Activated CD8-positive, alpha-beta memory T cell treated with anti-CD3 and anti-CD28 coated beads, Interleukin-2, amount 10 ng/mL, durations not matched to agents 7 days and 5 days (primary cell): ENCODE measurements at regions of chr15 and their contacts with region 1.

Region 1: GRCh38 chr15:89740137-89740536 is 10.9 kb downstream of the MESP1 start:
- DNase-seq: peak; percentile 71
- ATAC-seq: peak; percentile 95
- H3K4me3 Mint-ChIP-seq: no peak overlapping the region
- H3K27ac Mint-ChIP-seq: no peak overlapping the region
- H3K4me1 Mint-ChIP-seq: peaks cover 3% of the 10 kb centered on the region
- H3K27me3 Mint-ChIP-seq: peaks cover 2% of the 10 kb centered on the region

Region 2: GRCh38 chr15:89587952-89588351 is 152.2 kb before region 1 on chr15:
- CTCF ChIA-PET with region 1: no interaction called
- DNase-seq: no peak
- ATAC-seq: no peak
- H3K4me3 Mint-ChIP-seq: no peak overlapping the region
- H3K27ac Mint-ChIP-seq: no peak overlapping the region
- H3K4me1 Mint-ChIP-seq: peaks cover 2% of the 10 kb centered on the region
- H3K27me3 Mint-ChIP-seq: no peaks in the 10 kb centered on the region

Region 3: GRCh38 chr15:89728254-89728653 is 11.9 kb before region 1 on chr15:
- CTCF ChIA-PET with region 1: interaction called, 20 read pairs
- DNase-seq: no peak
- ATAC-seq: no peak
- H3K4me3 Mint-ChIP-seq: no peak overlapping the region
- H3K27ac Mint-ChIP-seq: no peak overlapping the region
- H3K4me1 Mint-ChIP-seq: no peaks in the 10 kb centered on the region
- H3K27me3 Mint-ChIP-seq: peaks cover 26% of the 10 kb centered on the region

Region 4: DNA sequence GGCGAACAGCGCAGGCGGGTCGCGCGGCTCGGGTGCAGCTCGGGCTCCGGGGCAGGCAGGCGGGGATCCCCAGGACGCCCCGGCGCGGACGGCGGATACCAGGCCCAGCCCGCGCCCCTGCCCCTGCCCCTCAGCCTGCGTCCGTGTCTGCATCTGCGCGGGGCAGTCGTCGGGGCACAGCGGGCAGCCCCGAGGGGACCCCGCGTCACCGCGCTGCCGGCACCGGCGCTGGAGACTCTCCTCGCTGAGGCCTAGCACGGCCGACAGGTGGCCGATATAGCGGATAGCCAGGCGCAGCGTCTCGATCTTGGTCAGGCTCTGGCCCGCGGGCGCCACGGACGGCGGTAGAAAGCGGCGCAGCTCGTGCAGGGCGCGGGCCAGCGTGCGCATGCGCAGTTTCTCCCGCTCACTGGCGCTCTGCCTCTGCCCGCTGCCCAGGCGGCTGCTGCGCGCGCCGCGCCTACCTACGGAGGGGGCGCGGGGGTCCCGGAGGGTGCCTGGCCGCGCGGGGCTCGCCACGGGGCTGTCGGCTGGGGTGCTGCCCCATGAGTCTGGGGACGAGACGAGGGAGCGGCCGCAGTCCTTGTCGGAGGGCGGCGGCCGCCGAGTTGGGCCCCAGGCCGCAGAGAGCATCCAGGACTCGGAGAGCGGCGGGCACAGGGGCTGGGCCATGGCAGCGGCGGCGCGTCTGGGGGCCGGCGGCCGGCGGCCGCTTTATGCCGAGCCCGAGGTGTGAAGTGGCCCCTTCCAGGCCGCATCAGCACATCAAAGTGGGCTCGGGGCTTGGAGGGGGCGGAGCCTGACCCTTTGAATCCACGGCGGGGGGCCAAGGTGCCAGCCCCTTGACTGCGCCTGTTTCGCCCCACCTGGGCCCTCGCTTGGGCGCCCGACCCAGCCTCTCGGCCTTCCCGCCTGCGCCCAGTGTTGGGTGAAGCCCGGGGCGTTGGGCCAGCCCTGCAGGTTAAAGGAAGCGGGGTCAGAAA is 10.7 kb after region 1 on chr15 and contains the start of gene MESP1:
- CTCF ChIA-PET with region 1: interaction called, 25 read pairs
- DNase-seq: peak; percentile 92
- ATAC-seq: peak; percentile 99
- H3K4me3 Mint-ChIP-seq: peak within 1 kb of the TSS; percentile 64
- H3K27ac Mint-ChIP-seq: no peak within 1 kb of the TSS
- H3K4me1 Mint-ChIP-seq: peaks cover 2% of the 10 kb centered on the region
- H3K27me3 Mint-ChIP-seq: peaks cover 17% of the 10 kb centered on the region
- total RNA-seq, gene MESP1: 3.1 to 5.1 TPM